Adrenal gland (tissue), 19 donors: ENCODE measurements at regions of chr7 and their contacts with region 1.

Region 1: GRCh38 chr7:43582503-43583423 is at the start of gene STK17A:
- DNase-seq: peak; percentile 89 to 96 (median 93)
- H3K4me3 ChIP-seq: peak within 1 kb of the TSS; percentile 76 to 97 (median 85)
- H3K27ac ChIP-seq: peak within 1 kb of the TSS; percentile 59 to 96 (median 88)
- H3K4me1 ChIP-seq: peaks cover 9 to 37% of the 10 kb centered on the region in 2 donors
- H3K27me3 ChIP-seq: no peaks in the 10 kb centered on the region
- CTCF ChIP-seq: peak; percentile 96 to 100 (median 100)
- POLR2A ChIP-seq: peak; percentile 66 to 86
- total RNA-seq, gene STK17A: 11.1 to 46.0 (median 30.3) TPM

Region 2: GRCh38 chr7:43698460-43699255 is 115.9 kb after region 1 on chr7:
- intact Hi-C with region 1: loop called in 1 of 2 experiments (anchors 2 kb)
- DNase-seq: no peak
- H3K4me3 ChIP-seq: no peak overlapping the region
- H3K27ac ChIP-seq: no peak overlapping the region
- H3K4me1 ChIP-seq: peaks cover 0 to 36% of the 10 kb centered on the region in 2 donors
- H3K27me3 ChIP-seq: no peaks in the 10 kb centered on the region
- CTCF ChIP-seq: no peak
- POLR2A ChIP-seq: no peak

Region 3: GRCh38 chr7:43721193-43721806 is 138.5 kb after region 1 on chr7:
- intact Hi-C with region 1: loop called in 1 of 2 experiments (anchors 5 kb)
- DNase-seq: no peak
- H3K4me3 ChIP-seq: no peak overlapping the region
- H3K27ac ChIP-seq: no peak overlapping the region
- H3K4me1 ChIP-seq: no peaks in the 10 kb centered on the region
- H3K27me3 ChIP-seq: no peaks in the 10 kb centered on the region
- CTCF ChIP-seq: peak; percentile 52 to 87 (median 72)
- POLR2A ChIP-seq: no peak

Region 4: GRCh38 chr7:43834463-43835251 is 251.9 kb after region 1 on chr7:
- intact Hi-C with region 1: loop called in 1 of 2 experiments (anchors 5 kb)
- DNase-seq: peak in 2 of 7 donors; percentile 5 to 21
- H3K4me3 ChIP-seq: peak overlapping the region in 1 of 4 donors; percentile 30
- H3K27ac ChIP-seq: no peak overlapping the region
- H3K4me1 ChIP-seq: no peaks in the 10 kb centered on the region
- H3K27me3 ChIP-seq: peaks cover 4% of the 10 kb centered on the region
- CTCF ChIP-seq: no peak
- POLR2A ChIP-seq: no peak